ENCODE measurements at regions of chr6 and their contacts with region 1.

Region 1: DNA sequence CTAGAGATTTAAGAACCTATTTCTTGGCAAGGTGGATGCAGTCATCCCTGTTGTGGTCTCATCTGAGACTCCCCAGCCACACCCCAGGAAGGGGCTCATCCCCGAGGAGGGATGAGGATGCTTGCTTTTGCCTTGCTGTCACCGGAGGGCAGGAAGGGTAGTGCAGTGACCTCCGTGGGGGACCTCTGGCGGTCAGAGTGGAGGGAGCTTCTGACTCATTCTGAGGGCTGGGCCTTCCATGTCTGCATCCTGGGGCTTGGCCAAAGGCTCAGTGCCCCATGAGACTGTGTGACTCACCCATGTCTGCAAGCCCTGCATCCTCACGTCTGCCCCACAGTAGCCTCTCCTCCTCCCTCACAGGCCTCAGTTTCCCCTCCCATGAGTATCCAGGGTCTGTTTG is 38.7 kb downstream of the UQCC2 start:
- DNase-seq: peak; percentile 92
- H3K4me3 ChIP-seq: no peak overlapping the region
- H3K27ac ChIP-seq: peak overlapping the region; percentile 13
- H3K4me1 ChIP-seq: peaks cover 25% of the 10 kb centered on the region
- H3K27me3 ChIP-seq: no peaks in the 10 kb centered on the region
- CTCF ChIP-seq: peak; percentile 51 to 70
- POLR2A ChIP-seq: no peak

Region 2: DNA sequence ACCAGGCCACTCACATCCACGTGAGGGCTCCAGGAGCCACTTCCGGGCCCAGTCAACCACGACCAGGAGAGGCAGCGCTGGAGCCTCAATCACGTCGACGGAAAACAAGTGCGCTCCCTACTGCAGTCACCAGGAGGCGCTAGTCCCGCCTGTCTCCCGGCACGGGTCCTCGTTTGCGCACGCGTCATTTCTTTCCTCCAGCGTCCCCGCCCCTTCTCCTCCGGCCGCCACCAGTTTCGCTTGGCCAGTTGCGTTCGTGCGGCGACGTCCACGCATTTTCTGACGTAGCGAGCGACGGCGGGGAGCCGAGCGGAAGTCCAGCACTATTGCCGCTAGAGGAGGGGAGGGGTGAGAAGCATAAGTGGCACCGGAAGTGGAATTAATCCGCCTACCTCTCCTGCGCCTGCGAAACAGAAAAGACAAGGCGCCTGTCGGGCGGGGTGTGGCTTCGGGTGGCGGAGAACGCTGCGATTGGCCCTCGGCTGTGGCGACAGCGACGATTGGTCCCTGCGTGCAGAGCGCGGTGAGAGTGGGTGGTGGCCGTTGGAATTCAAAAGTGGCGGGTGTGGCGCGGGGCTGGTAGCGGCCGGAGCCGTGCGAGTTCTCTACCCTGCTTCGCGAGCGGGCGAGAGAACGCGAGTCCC is 281.4 kb before region 1 on chr6 and contains the start of gene KIFC1:
- CTCF ChIA-PET with region 1: no interaction called
- POLR2A ChIA-PET with region 1: no interaction called
- dilution Hi-C with region 1: no loop called
- intact Hi-C with region 1: no loop called
- DNase-seq: peak; percentile 100
- H3K4me3 ChIP-seq: peak within 1 kb of the TSS; percentile 73 to 85 (median 84)
- H3K27ac ChIP-seq: peak within 1 kb of the TSS; percentile 57
- H3K4me1 ChIP-seq: peaks cover 26% of the 10 kb centered on the region
- H3K27me3 ChIP-seq: no peaks in the 10 kb centered on the region
- CTCF ChIP-seq: peak; percentile 98 to 99
- POLR2A ChIP-seq: peak; percentile 28
- total RNA-seq, gene KIFC1: 63.4 and 65.9 TPM in 2 replicates

Region 3: GRCh38 chr6:33620856-33621710 is 51.7 kb before region 1 on chr6 and contains the start of gene ITPR3:
- CTCF ChIA-PET with region 1: interaction called, 6 read pairs
- POLR2A ChIA-PET with region 1: no interaction called
- dilution Hi-C with region 1: no loop called
- intact Hi-C with region 1: loop called (anchors 5 kb)
- DNase-seq: peak; percentile 32
- H3K4me3 ChIP-seq: peak within 1 kb of the TSS; percentile 78 to 93 (median 78)
- H3K27ac ChIP-seq: peak within 1 kb of the TSS; percentile 62
- H3K4me1 ChIP-seq: peaks cover 15% of the 10 kb centered on the region
- H3K27me3 ChIP-seq: no peaks in the 10 kb centered on the region
- CTCF ChIP-seq: no peak
- POLR2A ChIP-seq: peak; percentile 9
- total RNA-seq, gene ITPR3: 40.5 and 52.2 TPM in 2 replicates

Region 4: GRCh38 chr6:33633462-33634158 is 39.2 kb before region 1 on chr6:
- CTCF ChIA-PET with region 1: interaction called, 4 read pairs
- POLR2A ChIA-PET with region 1: no interaction called
- dilution Hi-C with region 1: no loop called
- intact Hi-C with region 1: loop called (anchors 5 kb)
- DNase-seq: peak; percentile 66
- H3K4me3 ChIP-seq: peak overlapping the region; percentile 33 to 68 (median 35)
- H3K27ac ChIP-seq: no peak overlapping the region
- H3K4me1 ChIP-seq: peaks cover 23% of the 10 kb centered on the region
- H3K27me3 ChIP-seq: no peaks in the 10 kb centered on the region
- CTCF ChIP-seq: no peak
- POLR2A ChIP-seq: peak; percentile 39

Region 5: GRCh38 chr6:33654831-33655554 is 17.8 kb before region 1 on chr6:
- CTCF ChIA-PET with region 1: interaction called, 13 read pairs
- POLR2A ChIA-PET with region 1: no interaction called
- dilution Hi-C with region 1: no loop called
- intact Hi-C with region 1: no loop called
- DNase-seq: no peak
- H3K4me3 ChIP-seq: no peak overlapping the region
- H3K27ac ChIP-seq: no peak overlapping the region
- H3K4me1 ChIP-seq: no peaks in the 10 kb centered on the region
- H3K27me3 ChIP-seq: no peaks in the 10 kb centered on the region
- CTCF ChIP-seq: no peak
- POLR2A ChIP-seq: no peak

Region 6: GRCh38 chr6:33751771-33752645 is 79.2 kb after region 1 on chr6:
- CTCF ChIA-PET with region 1: no interaction called
- POLR2A ChIA-PET with region 1: no interaction called
- dilution Hi-C with region 1: no loop called
- intact Hi-C with region 1: no loop called
- DNase-seq: no peak
- H3K4me3 ChIP-seq: no peak overlapping the region
- H3K27ac ChIP-seq: no peak overlapping the region
- H3K4me1 ChIP-seq: no peaks in the 10 kb centered on the region
- H3K27me3 ChIP-seq: peaks cover 0 to 2% of the 10 kb centered on the region in 2 experiments
- CTCF ChIP-seq: no peak
- POLR2A ChIP-seq: no peak

Measured in endothelial cell of umbilical vein (primary cell).